ENCODE measurements at regions of chr11 and their contacts with region 1.

Region 1: DNA sequence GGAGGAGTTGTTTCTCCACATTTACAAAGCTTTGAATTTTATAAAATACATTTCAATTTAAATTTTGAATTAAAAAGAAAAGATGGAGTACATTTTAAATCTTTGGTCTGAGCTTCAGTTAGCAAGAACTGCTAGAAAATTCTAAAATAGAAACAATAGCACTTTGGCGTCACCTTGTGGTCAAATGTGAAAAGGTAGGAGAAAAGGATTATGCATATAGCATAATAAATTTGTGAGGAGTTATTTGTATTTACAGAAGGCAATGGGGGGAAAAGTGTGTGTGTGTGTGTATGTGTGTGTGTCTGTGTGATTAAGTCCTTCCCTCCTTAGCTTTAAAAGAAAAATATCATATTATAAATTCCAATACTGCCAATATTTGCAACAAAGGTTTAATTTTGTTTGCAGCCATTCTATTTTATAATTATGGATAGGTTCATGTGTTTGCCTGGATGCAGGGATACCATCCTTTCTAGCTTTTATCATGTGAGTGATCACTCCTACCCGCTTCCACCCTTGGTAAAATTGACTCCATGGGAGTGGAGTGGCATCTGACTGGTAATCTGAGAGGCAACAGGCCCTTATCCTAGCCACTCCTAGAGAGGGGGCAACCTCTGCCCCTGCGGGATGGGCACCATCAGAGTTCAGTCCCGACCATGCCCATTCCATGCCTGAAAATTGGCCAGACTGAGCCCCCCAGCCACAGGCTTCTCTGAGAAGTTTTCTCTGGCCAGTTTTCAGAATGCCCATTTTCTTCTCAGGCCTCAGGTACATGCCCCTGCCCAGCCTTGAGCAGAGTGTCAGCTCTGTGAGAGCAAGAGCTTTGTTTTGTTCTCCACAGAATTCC is 13.6 kb upstream of the LGR4 start:
- DNase-seq: no peak
- H3K4me3 ChIP-seq: no peak overlapping the region
- CTCF ChIP-seq: peak; percentile 60

Region 2: DNA sequence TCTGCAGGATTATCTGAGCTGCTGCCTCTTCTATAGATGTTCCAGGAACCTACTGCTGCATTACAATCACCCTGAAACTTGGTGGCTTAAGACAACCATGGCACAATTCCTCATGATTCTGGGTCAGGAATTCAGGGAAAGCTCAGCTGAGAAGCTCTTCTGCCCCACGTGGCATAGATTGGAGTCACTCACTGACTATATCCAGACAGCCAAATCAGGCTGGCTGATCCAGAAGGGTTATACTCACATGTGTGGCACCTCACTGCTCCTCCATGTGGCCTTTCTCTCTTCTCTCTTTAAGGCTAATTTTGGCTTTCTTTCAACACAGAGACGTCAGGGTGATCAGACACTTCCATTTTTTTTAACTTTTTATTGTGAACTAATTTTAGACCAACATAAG is 320.0 kb before region 1 on chr11:
- CTCF ChIA-PET with region 1: interaction called, 38 read pairs
- POLR2A ChIA-PET with region 1: no interaction called
- DNase-seq: no peak
- H3K4me3 ChIP-seq: no peak overlapping the region
- CTCF ChIP-seq: no peak

Region 3: DNA sequence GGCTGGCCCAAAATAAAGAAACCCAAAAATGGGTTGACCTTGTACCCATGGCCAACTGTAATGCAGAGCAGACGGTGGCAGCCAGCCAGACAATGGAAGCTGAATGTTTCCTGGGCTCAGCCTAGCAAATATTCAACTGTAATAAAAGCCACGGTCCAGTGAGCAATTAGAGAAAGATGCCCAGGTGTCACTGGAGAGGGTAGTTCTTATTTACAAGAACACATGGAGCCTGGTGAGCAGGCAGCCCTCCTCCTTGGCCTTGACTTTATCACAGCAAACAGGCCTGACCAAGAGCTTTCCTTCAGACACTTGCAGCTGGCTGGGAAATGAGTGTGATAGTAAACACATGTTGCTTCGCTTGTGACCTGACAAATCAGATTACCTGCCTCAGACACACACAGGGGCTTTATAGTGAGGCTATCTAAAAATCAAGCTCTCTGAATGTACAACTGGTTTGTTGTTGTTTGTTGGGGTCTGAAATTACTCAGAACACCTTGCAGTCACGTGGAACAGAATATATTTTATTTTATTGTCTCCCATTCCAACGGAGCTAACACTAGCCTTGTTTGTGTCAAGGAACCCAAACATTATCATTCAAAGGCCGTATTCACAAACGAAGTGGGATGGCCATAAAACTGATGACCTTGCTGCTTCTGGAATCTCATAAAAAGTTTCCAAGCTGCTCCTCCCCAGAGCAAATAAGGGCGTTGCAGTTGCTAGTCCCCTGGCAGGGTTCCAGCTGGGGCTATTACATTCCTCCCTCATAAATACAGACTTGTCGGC is 284.5 kb before region 1 on chr11:
- CTCF ChIA-PET with region 1: interaction called, 35 read pairs
- POLR2A ChIA-PET with region 1: no interaction called
- DNase-seq: no peak
- H3K4me3 ChIP-seq: no peak overlapping the region
- CTCF ChIP-seq: no peak

Region 4: DNA sequence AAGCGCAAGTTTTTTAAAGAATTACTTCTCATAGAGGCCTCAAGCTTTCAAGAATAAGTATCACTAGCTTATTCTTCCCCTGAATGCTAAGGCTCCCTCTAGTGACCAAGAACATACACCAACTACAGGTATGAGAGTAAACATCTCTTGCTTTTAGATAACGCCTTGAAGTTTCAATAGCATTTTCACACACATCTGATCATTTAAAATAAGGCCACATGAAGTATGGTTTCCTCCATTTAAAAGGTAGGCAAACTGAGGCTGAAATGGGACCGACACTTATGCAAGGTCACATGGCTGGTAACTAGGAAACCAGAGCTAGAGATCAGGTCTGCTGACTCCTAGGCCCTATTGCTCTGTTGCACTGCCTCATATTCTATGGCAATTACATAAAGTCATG is 189.7 kb before region 1 on chr11:
- CTCF ChIA-PET with region 1: interaction called, 85 read pairs
- POLR2A ChIA-PET with region 1: no interaction called
- DNase-seq: no peak
- H3K4me3 ChIP-seq: no peak overlapping the region
- CTCF ChIP-seq: peak; percentile 62

Region 5: GRCh38 chr11:27392278-27393114 is 93.7 kb before region 1 on chr11:
- CTCF ChIA-PET with region 1: interaction called, 10 read pairs
- POLR2A ChIA-PET with region 1: no interaction called
- DNase-seq: peak; percentile 59
- H3K4me3 ChIP-seq: no peak overlapping the region
- CTCF ChIP-seq: no peak

Region 6: GRCh38 chr11:27861706-27862430 is 375.7 kb after region 1 on chr11:
- CTCF ChIA-PET with region 1: no interaction called
- POLR2A ChIA-PET with region 1: no interaction called
- DNase-seq: peak; percentile 69
- H3K4me3 ChIP-seq: no peak overlapping the region
- CTCF ChIP-seq: no peak

Measured in AG04449 (cell line).